ENCODE measurements at regions of chr3 and their contacts with region 1.

Region 1: DNA sequence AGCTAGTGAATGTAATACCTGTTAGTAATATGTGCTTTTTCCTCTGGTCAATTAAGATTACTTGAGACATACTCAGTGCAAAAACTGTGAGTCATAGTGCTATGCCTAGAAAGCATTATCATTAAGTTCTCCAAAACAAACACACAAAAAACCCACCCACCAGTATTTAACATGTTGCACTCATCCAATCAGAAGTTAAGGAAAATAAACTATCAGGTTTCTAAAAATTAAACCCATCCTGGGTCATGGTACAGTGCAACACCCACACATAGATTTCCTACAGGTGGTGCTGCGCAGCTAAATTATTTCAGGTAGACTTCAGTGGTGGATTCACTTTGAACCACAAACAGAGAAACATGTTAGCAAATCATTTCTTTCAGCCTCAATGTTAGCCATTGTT is 264.4 kb upstream of the VEPH1 start:
- DNase-seq: no peak
- H3K4me3 ChIP-seq: no peak overlapping the region
- H3K27ac ChIP-seq: no peak overlapping the region
- H3K4me1 ChIP-seq: no peaks in the 10 kb centered on the region
- H3K27me3 ChIP-seq: no peaks in the 10 kb centered on the region
- CTCF ChIP-seq: no peak

Region 2: GRCh38 chr3:157639756-157640426 is 127.7 kb before region 1 on chr3:
- dilution Hi-C with region 1: loop called (anchors 10 kb)
- DNase-seq: no peak
- H3K4me3 ChIP-seq: no peak overlapping the region
- H3K27ac ChIP-seq: no peak overlapping the region
- H3K4me1 ChIP-seq: no peaks in the 10 kb centered on the region
- H3K27me3 ChIP-seq: no peaks in the 10 kb centered on the region
- CTCF ChIP-seq: no peak

Region 3: GRCh38 chr3:157660847-157661246 is 106.8 kb before region 1 on chr3:
- dilution Hi-C with region 1: no loop called
- DNase-seq: no peak
- H3K4me3 ChIP-seq: no peak overlapping the region
- H3K27ac ChIP-seq: no peak overlapping the region
- H3K4me1 ChIP-seq: no peaks in the 10 kb centered on the region
- H3K27me3 ChIP-seq: no peaks in the 10 kb centered on the region
- CTCF ChIP-seq: no peak

Region 4: GRCh38 chr3:157819270-157820156 is 51.9 kb after region 1 on chr3:
- dilution Hi-C with region 1: loop called (anchors 10 kb)
- DNase-seq: no peak
- H3K4me3 ChIP-seq: no peak overlapping the region
- H3K27ac ChIP-seq: no peak overlapping the region
- H3K4me1 ChIP-seq: no peaks in the 10 kb centered on the region
- H3K27me3 ChIP-seq: no peaks in the 10 kb centered on the region
- CTCF ChIP-seq: no peak

Region 5: DNA sequence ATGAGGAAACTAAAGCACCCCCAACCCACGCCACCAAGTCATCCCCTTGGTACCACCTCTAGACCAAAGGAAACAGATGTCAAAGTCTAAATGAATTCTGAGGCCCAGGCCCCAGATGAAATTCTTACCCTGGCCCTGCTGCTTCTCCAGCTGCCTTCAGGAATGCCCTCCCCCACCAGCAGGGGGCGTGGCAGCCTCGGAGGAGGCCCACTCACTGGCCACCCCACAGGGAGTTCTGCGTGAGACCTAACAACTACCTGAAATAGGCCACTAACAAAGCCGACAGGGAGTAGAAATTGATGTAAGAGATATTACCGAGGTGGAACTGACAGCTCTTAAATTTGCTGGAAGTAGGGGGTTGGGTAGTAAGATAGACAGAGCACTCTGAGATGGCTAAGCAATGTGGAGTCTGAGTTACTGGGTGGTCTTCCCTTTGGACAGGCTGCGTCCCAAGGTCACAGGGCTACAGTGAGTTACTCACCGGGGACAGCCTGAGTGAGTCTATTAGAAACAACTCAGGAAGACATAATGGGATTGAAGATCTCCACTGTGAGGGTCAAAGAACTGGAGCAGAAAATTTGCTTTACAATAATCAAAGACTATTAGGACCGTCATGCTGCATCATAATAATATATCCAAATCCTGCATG is 97.9 kb after region 1 on chr3:
- dilution Hi-C with region 1: no loop called
- DNase-seq: no peak
- H3K4me3 ChIP-seq: no peak overlapping the region
- H3K27ac ChIP-seq: no peak overlapping the region
- H3K4me1 ChIP-seq: no peaks in the 10 kb centered on the region
- H3K27me3 ChIP-seq: no peaks in the 10 kb centered on the region
- CTCF ChIP-seq: peak; percentile 61 to 83 (median 76)

Measured in keratinocyte (primary cell).